Activated CD4-positive, alpha-beta memory T cell treated with anti-CD3 and anti-CD28 coated beads for 36 hours (primary cell): ENCODE measurements at regions of chr13 and their contacts with region 1.

Region 1: DNA sequence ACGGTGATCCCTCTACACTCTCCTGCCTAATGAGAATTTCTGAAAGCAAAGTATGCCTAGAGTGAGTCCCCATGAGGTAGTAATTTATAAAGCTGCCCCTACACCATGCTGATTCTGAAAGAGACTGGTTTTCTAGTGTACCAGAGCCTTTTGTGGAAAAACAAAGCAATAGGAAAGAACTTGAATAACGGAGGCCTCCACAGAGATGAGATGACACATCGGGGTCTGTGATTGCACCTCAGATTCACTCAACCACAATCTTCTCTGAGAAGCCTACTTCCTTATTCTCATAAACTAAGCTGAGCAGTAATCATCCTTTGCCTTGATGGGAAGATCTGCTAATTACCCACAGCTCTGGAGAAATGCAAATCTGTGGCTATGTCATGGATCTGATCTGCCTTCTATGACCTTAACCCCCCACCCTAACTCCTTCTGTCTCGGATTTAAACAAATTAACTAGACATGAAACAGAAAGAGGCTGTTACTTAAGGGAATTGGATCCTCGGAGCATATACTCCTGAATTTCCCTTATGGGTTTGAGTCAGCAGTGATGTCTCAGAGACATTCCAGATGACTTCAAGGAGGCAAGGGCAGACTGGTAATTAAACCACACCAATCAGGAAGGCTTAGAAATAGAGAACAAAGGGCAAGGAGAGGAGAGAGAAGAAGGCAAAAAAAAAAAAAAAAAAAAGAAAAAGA is 128.0 kb downstream of the DCT start:
- DNase-seq: peak; percentile 28
- H3K4me3 Mint-ChIP-seq: no peak overlapping the region
- H3K27ac Mint-ChIP-seq: no peak overlapping the region
- H3K4me1 Mint-ChIP-seq: peaks cover 20% of the 10 kb centered on the region
- H3K27me3 Mint-ChIP-seq: peaks cover 2% of the 10 kb centered on the region

Region 2: GRCh38 chr13:93151277-93151676 is 1200.2 kb before region 1 on chr13:
- CTCF ChIA-PET with region 1: no interaction called
- POLR2A ChIA-PET with region 1: no interaction called
- intact Hi-C with region 1: loop called (anchors 5 kb)
- DNase-seq: no peak
- H3K4me3 Mint-ChIP-seq: no peak overlapping the region
- H3K27ac Mint-ChIP-seq: no peak overlapping the region
- H3K4me1 Mint-ChIP-seq: peaks cover 3% of the 10 kb centered on the region
- H3K27me3 Mint-ChIP-seq: no peaks in the 10 kb centered on the region

Region 3: GRCh38 chr13:94239135-94239534 is 112.3 kb before region 1 on chr13:
- CTCF ChIA-PET with region 1: no interaction called
- POLR2A ChIA-PET with region 1: no interaction called
- intact Hi-C with region 1: loop called (anchors 5 kb)
- DNase-seq: no peak
- H3K4me3 Mint-ChIP-seq: no peak overlapping the region
- H3K27ac Mint-ChIP-seq: no peak overlapping the region
- H3K4me1 Mint-ChIP-seq: peaks cover 36% of the 10 kb centered on the region
- H3K27me3 Mint-ChIP-seq: no peaks in the 10 kb centered on the region

Region 4: GRCh38 chr13:94362411-94362909 is 11.0 kb after region 1 on chr13:
- CTCF ChIA-PET with region 1: interaction called, 17 read pairs
- POLR2A ChIA-PET with region 1: no interaction called
- intact Hi-C with region 1: no loop called
- DNase-seq: peak; percentile 73
- H3K4me3 Mint-ChIP-seq: no peak overlapping the region
- H3K27ac Mint-ChIP-seq: no peak overlapping the region
- H3K4me1 Mint-ChIP-seq: peaks cover 6% of the 10 kb centered on the region
- H3K27me3 Mint-ChIP-seq: peaks cover 8% of the 10 kb centered on the region